H1 (cell line): ENCODE measurements at regions of chr2 and their contacts with region 1.

Region 1: GRCh38 chr2:126971481-126972278 is 73.0 kb downstream of the TEX51 start:
- DNase-seq: peak; percentile 56 to 90
- H3K4me3 ChIP-seq: no peak overlapping the region
- H3K27ac ChIP-seq: no peak overlapping the region
- H3K4me1 ChIP-seq: peaks cover 0 to 17% (median 5%) of the 10 kb centered on the region in 4 experiments; a peak in 5 of 7 replicates
- H3K27me3 ChIP-seq: peaks cover 0 to 9% (median 5%) of the 10 kb centered on the region in 4 experiments; a peak in 3 of 7 replicates
- CTCF ChIP-seq: peak; percentile 87 to 95 (median 89)
- EP300 ChIP-seq: no peak
- POLR2A ChIP-seq: no peak
- RAD21 ChIP-seq: peak; percentile 96 to 99

Region 2: GRCh38 chr2:126543081-126543480 is 428.6 kb before region 1 on chr2:
- CTCF ChIA-PET with region 1: no interaction called
- POLR2A ChIA-PET with region 1: no interaction called
- DNase-seq: no peak
- H3K4me3 ChIP-seq: no peak overlapping the region
- H3K27ac ChIP-seq: no peak overlapping the region
- H3K4me1 ChIP-seq: no peaks in the 10 kb centered on the region
- H3K27me3 ChIP-seq: no peaks in the 10 kb centered on the region
- CTCF ChIP-seq: no peak
- EP300 ChIP-seq: no peak
- POLR2A ChIP-seq: no peak
- RAD21 ChIP-seq: no peak

Region 3: DNA sequence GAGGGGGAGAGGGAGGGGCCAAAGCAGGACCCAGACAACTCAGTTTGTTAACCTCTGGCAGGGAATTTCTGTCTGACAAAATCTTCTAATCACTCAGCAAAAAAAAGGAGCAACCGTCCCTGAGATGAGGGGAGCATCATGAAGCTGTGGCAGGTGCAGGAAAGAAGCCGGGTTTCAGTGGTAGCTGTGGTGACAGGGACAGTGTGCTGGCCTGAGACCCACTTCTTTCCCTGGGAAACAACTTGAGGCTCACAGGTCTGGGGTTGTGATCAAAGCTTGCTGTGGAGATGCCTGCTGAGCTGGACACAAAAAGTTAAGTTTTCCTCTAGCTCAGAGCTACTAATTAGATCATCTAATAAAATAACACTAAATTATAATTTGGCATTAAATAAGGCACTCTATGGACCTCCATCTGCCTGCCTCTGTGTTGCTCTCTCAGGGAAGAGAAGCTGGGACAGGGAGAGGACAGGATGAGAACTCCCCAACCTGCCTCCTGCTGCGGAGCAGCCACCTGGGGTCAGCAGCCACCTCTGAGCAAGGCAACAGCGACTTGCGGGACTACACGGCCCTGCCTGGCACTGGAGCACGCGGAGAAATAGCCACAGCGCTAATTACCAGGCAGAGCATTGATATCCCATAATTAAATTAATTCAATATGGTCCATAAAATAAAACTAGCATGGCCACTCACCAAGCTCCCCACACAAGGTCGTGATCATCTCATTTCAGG is 177.6 kb before region 1 on chr2:
- CTCF ChIA-PET with region 1: interaction called, 19 read pairs
- POLR2A ChIA-PET with region 1: no interaction called
- DNase-seq: peak in 1 of 2 experiments; percentile 47
- H3K4me3 ChIP-seq: no peak overlapping the region
- H3K27ac ChIP-seq: no peak overlapping the region
- H3K4me1 ChIP-seq: peaks cover 0 to 2% (median under 1%) of the 10 kb centered on the region in 4 experiments; a peak in 2 of 7 replicates
- H3K27me3 ChIP-seq: 0 out of 7 replicates have a peak, but pooled peaks cover 0 to 2% (median 0%) of the 10 kb centered on the region in 4 experiments
- CTCF ChIP-seq: peak; percentile 38 to 47 (median 40); a peak in 3 of 4 replicates
- EP300 ChIP-seq: no peak
- POLR2A ChIP-seq: no peak
- RAD21 ChIP-seq: peak; percentile 54 to 70; a peak in 3 of 4 replicates

Region 4: GRCh38 chr2:126850940-126851339 is 120.7 kb before region 1 on chr2:
- CTCF ChIA-PET with region 1: interaction called, 18 read pairs
- POLR2A ChIA-PET with region 1: no interaction called
- DNase-seq: no peak
- H3K4me3 ChIP-seq: no peak overlapping the region
- H3K27ac ChIP-seq: no peak overlapping the region
- H3K4me1 ChIP-seq: no peaks in the 10 kb centered on the region
- H3K27me3 ChIP-seq: no peaks in the 10 kb centered on the region; a peak in 1 of 7 replicates
- CTCF ChIP-seq: no peak
- EP300 ChIP-seq: no peak
- POLR2A ChIP-seq: no peak
- RAD21 ChIP-seq: peak in 1 of 2 experiments; percentile 11; a peak in 1 of 4 replicates

Region 5: GRCh38 chr2:126891681-126892500 is 79.8 kb before region 1 on chr2:
- CTCF ChIA-PET with region 1: interaction called, 10 read pairs
- POLR2A ChIA-PET with region 1: no interaction called
- DNase-seq: no peak
- H3K4me3 ChIP-seq: no peak overlapping the region
- H3K27ac ChIP-seq: no peak overlapping the region
- H3K4me1 ChIP-seq: peaks cover 0 to 8% (median 0%) of the 10 kb centered on the region in 4 experiments; a peak in 1 of 7 replicates
- H3K27me3 ChIP-seq: peaks cover 0 to 4% (median 2%) of the 10 kb centered on the region in 4 experiments; a peak in 2 of 7 replicates
- CTCF ChIP-seq: no peak
- EP300 ChIP-seq: no peak
- POLR2A ChIP-seq: no peak
- RAD21 ChIP-seq: no peak

Region 6: GRCh38 chr2:127015106-127015910 is 43.6 kb after region 1 on chr2:
- CTCF ChIA-PET with region 1: interaction called, 18 read pairs
- POLR2A ChIA-PET with region 1: no interaction called
- DNase-seq: no peak
- H3K4me3 ChIP-seq: no peak overlapping the region
- H3K27ac ChIP-seq: no peak overlapping the region
- H3K4me1 ChIP-seq: peaks cover 0 to 5% (median 0%) of the 10 kb centered on the region in 4 experiments; a peak in 2 of 7 replicates
- H3K27me3 ChIP-seq: no peaks in the 10 kb centered on the region
- CTCF ChIP-seq: no peak
- EP300 ChIP-seq: no peak
- POLR2A ChIP-seq: no peak
- RAD21 ChIP-seq: no peak

Region 7: GRCh38 chr2:127064642-127065250 is 93.1 kb after region 1 on chr2:
- CTCF ChIA-PET with region 1: no interaction called
- POLR2A ChIA-PET with region 1: no interaction called
- DNase-seq: peak in 1 of 2 experiments; percentile 43
- H3K4me3 ChIP-seq: no peak overlapping the region
- H3K27ac ChIP-seq: peak overlapping the region; percentile 59; the same call in 1 of the 2 replicates
- H3K4me1 ChIP-seq: peaks cover 0 to 15% (median 8%) of the 10 kb centered on the region in 4 experiments; a peak in 5 of 7 replicates
- H3K27me3 ChIP-seq: peaks cover 0 to 3% (median 0%) of the 10 kb centered on the region in 4 experiments; a peak in 1 of 7 replicates
- CTCF ChIP-seq: no peak
- EP300 ChIP-seq: no peak
- POLR2A ChIP-seq: no peak
- RAD21 ChIP-seq: 0 out of 4 replicates have a peak, but pooled peaks of 1 of the 2 experiments have one; percentile 3

Region 8: DNA sequence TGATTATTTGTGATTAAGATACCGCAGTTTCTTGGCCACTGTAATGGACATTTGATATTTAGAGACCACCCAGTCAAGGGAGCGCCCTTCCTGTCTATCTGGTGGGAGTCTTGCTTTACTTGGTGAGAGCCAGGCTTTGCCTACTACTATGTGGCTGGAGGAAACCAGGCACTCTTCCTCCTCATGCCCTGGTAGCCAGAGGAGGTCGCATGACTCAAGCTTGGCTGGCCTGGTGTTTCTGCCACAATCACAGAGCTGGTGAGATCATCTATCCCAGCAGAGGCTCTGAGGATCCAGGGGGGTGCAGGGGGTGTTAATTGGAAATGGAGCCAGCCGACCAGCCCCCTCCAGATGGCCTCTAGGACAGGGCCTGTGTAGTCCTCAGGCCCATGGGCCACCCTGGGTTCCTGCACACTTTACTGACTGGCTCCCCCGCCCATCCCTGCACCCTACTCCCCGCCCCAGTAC is 182.0 kb after region 1 on chr2:
- CTCF ChIA-PET with region 1: no interaction called
- POLR2A ChIA-PET with region 1: no interaction called
- DNase-seq: no peak
- H3K4me3 ChIP-seq: no peak overlapping the region
- H3K27ac ChIP-seq: no peak overlapping the region
- H3K4me1 ChIP-seq: peaks cover 0 to 8% (median 5%) of the 10 kb centered on the region in 4 experiments; a peak in 4 of 7 replicates
- H3K27me3 ChIP-seq: no peaks in the 10 kb centered on the region
- CTCF ChIP-seq: no peak
- EP300 ChIP-seq: no peak
- POLR2A ChIP-seq: no peak
- RAD21 ChIP-seq: no peak

Region 9: DNA sequence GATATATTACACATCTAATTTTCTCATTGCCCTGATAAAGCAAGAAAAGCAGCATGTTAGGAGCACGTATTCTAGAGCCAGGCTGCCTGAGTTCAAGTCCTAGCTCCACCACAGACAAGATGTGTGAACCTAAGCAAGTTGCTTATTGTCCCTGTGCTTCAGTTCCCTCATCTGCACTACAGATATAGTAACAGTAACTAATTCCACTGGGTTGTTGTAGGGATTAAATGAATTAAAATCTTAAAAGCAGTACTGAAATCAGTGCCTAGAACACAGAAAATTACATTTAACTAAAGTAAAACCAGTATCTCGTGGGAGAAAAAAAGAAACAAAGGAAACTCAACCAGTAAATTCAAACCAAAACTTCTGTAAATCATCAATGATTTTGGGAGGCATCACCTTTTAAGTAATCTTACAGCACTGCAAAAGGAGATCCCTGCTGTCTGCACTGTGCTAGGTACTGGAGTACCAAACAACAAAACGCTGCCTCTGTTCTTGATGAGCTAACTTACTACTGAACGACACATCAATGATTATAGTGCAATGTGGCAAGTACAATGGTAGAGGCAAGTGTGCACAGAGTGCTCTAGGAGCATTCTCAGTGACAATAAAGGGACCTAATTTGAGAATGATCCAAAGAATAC is 408.2 kb after region 1 on chr2:
- CTCF ChIA-PET with region 1: no interaction called
- POLR2A ChIA-PET with region 1: no interaction called
- DNase-seq: no peak
- H3K4me3 ChIP-seq: no peak overlapping the region
- H3K27ac ChIP-seq: no peak overlapping the region
- H3K4me1 ChIP-seq: no peaks in the 10 kb centered on the region
- H3K27me3 ChIP-seq: no peaks in the 10 kb centered on the region
- CTCF ChIP-seq: no peak
- EP300 ChIP-seq: no peak
- POLR2A ChIP-seq: no peak
- RAD21 ChIP-seq: no peak